ENCODE measurements at regions of chr14 and their contacts with region 1.

Region 1: GRCh38 chr14:67426983-67427606 is 15.1 kb upstream of the PLEK2 start:
- DNase-seq: peak; percentile 85 to 91
- ATAC-seq: peak; percentile 85 to 94
- H3K4me3 ChIP-seq: no peak overlapping the region
- H3K27ac ChIP-seq: peak overlapping the region in 1 of 2 experiments; percentile 35; a peak in 1 of 6 replicates
- H3K4me1 ChIP-seq: peaks cover 9% of the 10 kb centered on the region
- CTCF ChIP-seq: peak; percentile 78
- EP300 ChIP-seq: no peak
- POLR2A ChIP-seq: no peak
- RAD21 ChIP-seq: peak; percentile 86 to 95

Region 2: DNA sequence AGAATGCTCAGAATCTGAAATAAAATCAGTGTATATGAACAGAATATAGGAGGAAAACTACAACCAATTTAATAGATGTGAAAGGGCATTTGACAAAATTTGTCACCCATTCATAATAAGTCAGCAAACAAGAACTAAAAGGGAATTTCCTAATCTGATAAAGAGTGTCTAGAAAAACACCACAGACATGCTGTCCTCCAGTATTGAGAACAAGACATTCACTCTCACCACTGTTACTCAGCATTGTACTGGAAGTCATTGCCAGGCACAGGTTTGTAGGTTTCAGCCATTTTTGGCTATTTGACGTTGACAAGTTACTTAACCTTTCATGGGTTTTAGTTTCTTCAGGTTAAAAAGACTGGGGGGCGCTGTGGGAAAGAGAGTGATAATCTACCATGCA is 53.7 kb before region 1 on chr14:
- CTCF ChIA-PET with region 1: no interaction called
- POLR2A ChIA-PET with region 1: no interaction called
- DNase-seq: no peak
- ATAC-seq: no peak
- H3K4me3 ChIP-seq: no peak overlapping the region
- H3K27ac ChIP-seq: no peak overlapping the region
- H3K4me1 ChIP-seq: 0 out of 3 replicates have a peak, but pooled peaks cover 5% of the 10 kb centered on the region
- CTCF ChIP-seq: no peak
- EP300 ChIP-seq: no peak
- POLR2A ChIP-seq: no peak
- RAD21 ChIP-seq: no peak

Region 3: DNA sequence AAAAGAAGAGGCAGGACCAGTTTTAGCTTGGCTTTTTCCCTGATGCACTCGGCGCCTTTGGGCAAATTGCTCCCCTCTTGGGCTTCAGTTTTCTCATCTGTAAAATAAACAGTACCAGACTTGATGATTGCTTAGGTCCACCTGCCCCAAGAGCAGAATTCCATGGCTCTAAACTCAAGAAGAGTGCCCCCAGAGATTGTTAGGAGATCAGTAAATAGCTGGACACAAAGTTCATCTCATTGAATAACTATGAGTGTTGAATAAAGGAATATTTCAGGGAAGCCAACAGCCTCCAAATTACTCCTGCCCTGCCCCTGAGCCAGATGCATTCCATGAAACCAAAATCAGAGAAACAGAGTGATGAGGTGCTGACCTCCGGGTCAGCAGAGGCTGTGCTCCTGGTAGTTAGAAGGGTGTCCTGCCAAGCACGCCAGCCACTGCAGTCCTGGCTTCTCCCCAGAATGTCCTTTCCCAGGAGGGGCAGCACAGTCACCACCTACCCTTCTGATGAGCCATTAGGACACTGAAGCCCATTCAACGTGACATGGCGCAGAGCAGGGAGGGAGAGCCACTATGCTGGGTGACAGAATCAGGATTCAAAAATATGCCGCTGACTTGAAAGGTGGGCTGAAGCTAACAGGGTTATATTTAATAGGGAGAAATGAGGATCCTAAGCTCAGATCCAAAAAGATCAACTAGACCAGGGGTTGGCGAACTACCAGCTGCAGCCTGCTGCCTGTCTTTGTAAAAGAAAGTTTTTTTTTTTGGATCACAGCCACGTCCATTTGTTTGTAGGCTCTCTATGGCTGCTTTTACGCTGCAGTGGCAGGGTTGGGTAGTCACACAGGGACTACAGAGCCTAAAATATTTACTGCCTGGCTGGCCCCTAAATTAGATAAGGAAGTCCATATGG is 19.3 kb after region 1 on chr14:
- CTCF ChIA-PET with region 1: interaction called, 63 read pairs
- POLR2A ChIA-PET with region 1: no interaction called
- DNase-seq: no peak
- ATAC-seq: no peak
- H3K4me3 ChIP-seq: no peak overlapping the region
- H3K27ac ChIP-seq: no peak overlapping the region
- H3K4me1 ChIP-seq: no peaks in the 10 kb centered on the region
- CTCF ChIP-seq: no peak
- EP300 ChIP-seq: no peak
- POLR2A ChIP-seq: no peak
- RAD21 ChIP-seq: no peak

Region 4: GRCh38 chr14:67467179-67468080 is 40.3 kb after region 1 on chr14:
- CTCF ChIA-PET with region 1: interaction called, 10 read pairs
- POLR2A ChIA-PET with region 1: no interaction called
- DNase-seq: no peak
- ATAC-seq: peak in 1 of 2 experiments; percentile 67; a peak in 3 of 6 replicates
- H3K4me3 ChIP-seq: no peak overlapping the region
- H3K27ac ChIP-seq: no peak overlapping the region
- H3K4me1 ChIP-seq: no peaks in the 10 kb centered on the region
- CTCF ChIP-seq: no peak
- EP300 ChIP-seq: no peak
- POLR2A ChIP-seq: no peak
- RAD21 ChIP-seq: no peak

Region 5: GRCh38 chr14:67526676-67527459 is 99.8 kb after region 1 on chr14:
- CTCF ChIA-PET with region 1: interaction called, 38 read pairs
- POLR2A ChIA-PET with region 1: no interaction called
- DNase-seq: peak; percentile 54 to 71
- ATAC-seq: peak; percentile 91 to 96
- H3K4me3 ChIP-seq: no peak overlapping the region
- H3K27ac ChIP-seq: no peak overlapping the region
- H3K4me1 ChIP-seq: no peaks in the 10 kb centered on the region
- CTCF ChIP-seq: peak; percentile 95
- EP300 ChIP-seq: no peak
- POLR2A ChIP-seq: no peak
- RAD21 ChIP-seq: peak; percentile 79 to 84

Region 6: GRCh38 chr14:67571272-67571850 is 144.3 kb after region 1 on chr14:
- CTCF ChIA-PET with region 1: interaction called, 517 read pairs
- POLR2A ChIA-PET with region 1: interaction called, 3 read pairs
- DNase-seq: peak; percentile 55 to 67
- ATAC-seq: peak; percentile 92 to 98
- H3K4me3 ChIP-seq: no peak overlapping the region
- H3K27ac ChIP-seq: no peak overlapping the region
- H3K4me1 ChIP-seq: no peaks in the 10 kb centered on the region
- CTCF ChIP-seq: peak; percentile 80
- EP300 ChIP-seq: no peak
- POLR2A ChIP-seq: no peak
- RAD21 ChIP-seq: peak; percentile 74 to 86

Region 7: GRCh38 chr14:67666750-67667449 is 239.8 kb after region 1 on chr14:
- CTCF ChIA-PET with region 1: interaction called, 28 read pairs
- POLR2A ChIA-PET with region 1: no interaction called
- DNase-seq: peak; percentile 43 to 68
- ATAC-seq: peak; percentile 81 to 96
- H3K4me3 ChIP-seq: no peak overlapping the region
- H3K27ac ChIP-seq: no peak overlapping the region
- H3K4me1 ChIP-seq: no peaks in the 10 kb centered on the region
- CTCF ChIP-seq: peak; percentile 82
- EP300 ChIP-seq: no peak
- POLR2A ChIP-seq: no peak
- RAD21 ChIP-seq: peak; percentile 80 to 83

Measured in A549 (cell line).